Colonic mucosa (tissue), 4 donors: ENCODE measurements at regions of chr12 and their contacts with region 1.

Region 1: GRCh38 chr12:4526923-4527546 is 11.7 kb upstream of the RAD51AP1 start:
- DNase-seq: no peak
- H3K4me3 ChIP-seq: no peak overlapping the region
- H3K27ac ChIP-seq: no peak overlapping the region
- H3K4me1 ChIP-seq: no peaks in the 10 kb centered on the region
- H3K27me3 ChIP-seq: no peaks in the 10 kb centered on the region
- CTCF ChIP-seq: peak; percentile 71

Region 2: DNA sequence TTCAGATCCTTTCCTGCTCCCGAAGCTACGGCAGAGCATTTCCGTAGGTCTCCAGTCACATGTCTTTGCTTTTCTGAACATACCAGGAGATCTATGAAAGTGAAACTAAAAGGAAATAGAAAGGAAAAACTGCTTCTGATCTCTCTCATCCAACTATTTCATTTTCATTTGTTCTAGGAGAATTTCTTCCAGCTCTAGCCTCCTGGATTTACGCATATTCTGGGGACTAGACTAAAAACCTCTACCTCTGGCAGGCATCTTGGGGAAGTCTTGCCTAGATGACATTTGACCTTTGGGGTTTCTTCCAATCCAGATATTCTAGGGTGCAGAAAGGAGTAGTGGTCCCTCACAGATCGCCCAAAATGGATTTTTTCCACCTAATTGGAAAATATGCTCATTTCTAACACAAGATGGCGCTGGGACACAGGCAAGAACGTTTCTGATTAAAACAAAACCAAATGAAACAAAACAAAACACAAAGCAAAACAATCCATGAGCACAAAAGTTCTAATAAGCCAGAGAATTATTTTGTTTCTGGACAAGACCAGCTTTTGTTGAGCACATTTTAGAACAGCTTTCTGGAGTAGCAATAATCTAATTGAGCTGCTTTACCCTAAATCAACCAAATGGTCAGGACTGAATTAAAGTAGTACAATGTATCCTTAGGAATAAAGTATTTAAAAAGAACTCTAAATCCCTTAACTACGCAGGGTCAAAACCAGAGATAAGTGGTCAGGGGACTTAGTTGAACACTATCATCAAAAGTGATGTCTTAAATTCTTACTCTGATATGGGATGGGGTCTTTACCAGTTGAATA is 641.5 kb before region 1 on chr12:
- intact Hi-C with region 1: loop called (anchors 10 kb)
- DNase-seq: peak; percentile 29
- H3K4me3 ChIP-seq: peak overlapping the region; percentile 21
- H3K27ac ChIP-seq: peak overlapping the region; percentile 52
- H3K4me1 ChIP-seq: peaks cover 3% of the 10 kb centered on the region
- H3K27me3 ChIP-seq: no peaks in the 10 kb centered on the region
- CTCF ChIP-seq: peak; percentile 64

Region 3: GRCh38 chr12:4307593-4308333 is 219.3 kb before region 1 on chr12:
- intact Hi-C with region 1: loop called (anchors 2 kb)
- DNase-seq: peak; percentile 87
- H3K4me3 ChIP-seq: no peak overlapping the region
- H3K27ac ChIP-seq: peak overlapping the region; percentile 38
- H3K4me1 ChIP-seq: peaks cover 7% of the 10 kb centered on the region
- H3K27me3 ChIP-seq: no peaks in the 10 kb centered on the region
- CTCF ChIP-seq: peak; percentile 45

Region 4: GRCh38 chr12:4356041-4356327 is 171.1 kb before region 1 on chr12:
- intact Hi-C with region 1: loop called (anchors 10 kb)
- DNase-seq: peak; percentile 48
- H3K4me3 ChIP-seq: no peak overlapping the region
- H3K27ac ChIP-seq: no peak overlapping the region
- H3K4me1 ChIP-seq: no peaks in the 10 kb centered on the region
- H3K27me3 ChIP-seq: no peaks in the 10 kb centered on the region
- CTCF ChIP-seq: peak; percentile 29

Region 5: DNA sequence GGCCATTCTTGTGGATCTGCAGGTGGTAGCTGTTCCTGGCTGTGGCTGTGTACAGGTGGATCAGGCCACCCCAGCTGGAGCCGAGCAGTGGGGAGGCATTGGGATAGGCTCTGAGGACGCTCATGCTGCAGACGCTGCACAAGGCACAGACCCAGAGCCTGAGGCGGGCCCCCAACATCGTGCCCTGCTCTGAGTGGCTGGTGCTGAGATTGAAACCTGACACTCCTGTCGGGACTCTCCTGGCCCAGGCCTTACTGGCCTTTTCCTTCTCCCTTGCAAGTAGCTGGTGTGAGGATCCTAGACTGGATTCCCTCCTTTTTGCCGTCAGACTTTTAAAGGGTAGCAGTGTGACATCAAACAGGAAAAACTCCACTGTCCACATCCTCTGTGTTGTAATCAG is 147.6 kb before region 1 on chr12 and contains the start of gene FGF23:
- intact Hi-C with region 1: no loop called
- DNase-seq: no peak
- H3K4me3 ChIP-seq: no peak within 1 kb of the TSS
- H3K27ac ChIP-seq: no peak within 1 kb of the TSS
- H3K4me1 ChIP-seq: no peaks in the 10 kb centered on the region
- H3K27me3 ChIP-seq: no peaks in the 10 kb centered on the region
- CTCF ChIP-seq: no peak
- total RNA-seq, gene FGF23: not detected

Region 6: DNA sequence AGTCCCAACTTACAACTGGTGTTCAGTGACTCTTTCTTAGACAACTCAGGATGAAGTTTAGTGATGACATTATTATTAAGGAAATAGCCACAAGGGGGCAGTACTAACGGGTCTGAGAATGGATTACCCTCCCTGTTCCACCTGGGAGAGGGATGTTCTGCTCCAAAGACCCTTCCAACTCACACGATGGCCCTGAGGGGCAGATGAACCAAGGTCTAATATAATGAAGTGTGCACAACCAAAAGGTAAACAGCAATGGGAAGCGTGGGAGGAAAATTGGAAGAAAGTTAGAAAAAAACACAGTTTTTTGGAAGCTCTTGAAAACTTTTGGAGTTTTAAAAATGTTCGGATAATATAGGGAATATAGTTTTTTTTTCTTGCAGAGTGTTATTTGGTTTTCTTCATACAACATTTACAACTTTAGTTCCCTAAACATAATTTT is 105.4 kb before region 1 on chr12:
- intact Hi-C with region 1: loop called (anchors 5 kb)
- DNase-seq: no peak
- H3K4me3 ChIP-seq: no peak overlapping the region
- H3K27ac ChIP-seq: no peak overlapping the region
- H3K4me1 ChIP-seq: no peaks in the 10 kb centered on the region
- H3K27me3 ChIP-seq: no peaks in the 10 kb centered on the region
- CTCF ChIP-seq: no peak

Region 7: DNA sequence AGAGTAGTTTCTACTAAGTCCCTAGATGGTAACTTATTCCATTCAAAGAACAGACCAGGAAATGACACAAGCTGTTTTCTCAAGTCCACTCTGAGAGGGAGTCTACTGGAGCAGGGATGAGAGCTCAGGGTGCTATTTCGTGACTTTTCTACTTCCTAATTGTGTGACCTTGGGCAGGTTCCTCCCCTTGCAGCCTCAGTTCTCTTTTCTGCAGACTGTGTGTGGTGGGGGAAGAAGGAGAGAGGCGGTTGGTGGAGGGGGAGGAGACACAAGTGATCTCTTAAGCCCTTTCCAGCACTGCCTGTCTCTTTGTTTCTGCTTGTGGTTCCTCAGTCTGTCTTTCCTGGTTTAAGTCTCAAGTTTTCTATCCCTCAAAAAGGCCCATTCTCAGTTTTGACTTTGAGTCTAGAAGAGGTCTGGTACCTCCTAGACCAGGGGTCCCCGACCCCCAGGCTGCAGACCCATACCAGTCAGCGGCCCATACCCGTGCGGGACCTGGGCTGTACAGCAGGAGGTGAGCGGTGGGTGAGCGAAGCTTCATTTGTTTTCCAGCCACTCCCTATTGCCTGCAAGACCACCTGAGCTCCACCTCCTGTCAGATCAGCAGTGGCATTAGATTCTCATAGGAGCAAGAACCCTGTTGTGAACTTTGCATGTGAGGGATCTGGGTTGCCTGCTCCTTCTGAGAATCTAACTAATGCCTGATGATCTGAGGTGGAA is 92.2 kb before region 1 on chr12:
- intact Hi-C with region 1: no loop called
- DNase-seq: peak; percentile 15
- H3K4me3 ChIP-seq: no peak overlapping the region
- H3K27ac ChIP-seq: no peak overlapping the region
- H3K4me1 ChIP-seq: no peaks in the 10 kb centered on the region
- H3K27me3 ChIP-seq: no peaks in the 10 kb centered on the region
- CTCF ChIP-seq: no peak

Region 8: DNA sequence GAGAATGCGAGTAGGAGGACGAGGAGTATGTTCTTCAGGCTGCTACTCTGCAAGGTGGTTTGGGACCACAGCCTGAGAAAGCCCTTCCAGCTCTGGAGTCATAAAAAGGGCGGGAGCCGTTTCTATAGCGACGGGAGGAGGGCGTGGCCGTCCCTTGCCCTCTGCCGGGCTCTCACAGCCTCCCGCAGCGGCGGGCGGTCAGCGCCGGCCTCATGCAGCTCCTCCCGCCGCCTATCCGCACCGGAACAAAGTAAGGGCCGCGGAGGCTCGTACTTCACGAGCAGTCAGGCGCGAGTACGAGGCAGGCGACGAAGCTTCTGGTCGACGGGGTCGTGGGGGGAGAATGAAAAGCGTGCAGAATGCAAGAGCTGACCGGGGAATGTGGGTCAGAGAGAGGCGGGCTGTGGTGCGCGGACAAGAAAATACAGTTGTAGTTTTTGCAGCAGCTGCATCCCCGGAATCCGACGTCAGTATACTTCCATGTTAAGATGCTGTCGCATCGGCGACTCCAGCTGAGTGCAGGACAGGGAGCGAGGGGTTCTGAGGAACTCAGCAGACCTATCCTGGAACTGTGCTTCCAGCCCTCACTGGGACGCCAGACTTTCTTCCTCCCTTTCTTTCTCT is 35.1 kb after region 1 on chr12 and contains the start of gene DYRK4:
- intact Hi-C with region 1: no loop called
- DNase-seq: peak; percentile 96
- H3K4me3 ChIP-seq: peak within 1 kb of the TSS; percentile 26
- H3K27ac ChIP-seq: no peak within 1 kb of the TSS
- H3K4me1 ChIP-seq: peaks cover 6% of the 10 kb centered on the region
- H3K27me3 ChIP-seq: no peaks in the 10 kb centered on the region
- CTCF ChIP-seq: no peak
- total RNA-seq, gene DYRK4: 20.9 to 26.7 TPM

Region 9: GRCh38 chr12:5123921-5124320 is 596.9 kb after region 1 on chr12:
- intact Hi-C with region 1: no loop called
- DNase-seq: no peak
- H3K4me3 ChIP-seq: no peak overlapping the region
- H3K27ac ChIP-seq: no peak overlapping the region
- H3K4me1 ChIP-seq: no peaks in the 10 kb centered on the region
- H3K27me3 ChIP-seq: no peaks in the 10 kb centered on the region
- CTCF ChIP-seq: no peak